ENCODE measurements at regions of chr13 and their contacts with region 1.

Region 1: DNA sequence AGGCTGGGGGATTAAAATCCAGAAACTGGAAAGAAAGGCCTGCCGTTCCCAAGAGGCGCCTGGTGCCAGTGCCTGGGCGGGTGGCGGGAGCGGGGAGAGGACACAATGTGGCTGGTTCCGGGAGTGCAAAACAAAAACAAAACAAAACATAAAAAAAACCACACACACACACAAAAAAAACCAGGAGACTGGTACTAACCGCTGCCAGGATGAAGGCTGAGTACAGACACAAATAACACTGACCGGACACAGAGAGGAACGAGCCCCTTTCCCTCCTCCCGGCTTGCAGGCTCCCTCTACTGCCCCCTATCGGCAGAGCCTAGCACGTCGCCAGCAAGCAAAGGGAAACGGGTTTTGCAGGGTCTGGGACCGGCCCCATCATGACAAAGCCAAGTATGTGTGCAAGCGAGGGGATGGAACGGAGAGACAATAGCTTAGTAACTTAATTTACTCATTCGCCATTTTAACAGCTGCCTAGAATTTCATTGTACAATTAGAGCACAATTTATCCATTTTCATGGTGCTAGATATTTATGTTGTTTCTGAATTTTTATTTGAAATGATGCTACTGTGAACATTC is 17.9 kb upstream of the ZDHHC20 start:
- DNase-seq: peak; percentile 87
- H3K4me3 ChIP-seq: peak overlapping the region in 3 of 4 donors; percentile 22 to 50 (median 36)
- H3K27ac ChIP-seq: peak overlapping the region in 3 of 4 donors; percentile 23 to 70 (median 58)
- H3K4me1 ChIP-seq: peaks cover 0 to 17% (median 4%) of the 10 kb centered on the region in 4 donors
- H3K27me3 ChIP-seq: peaks cover 5% of the 10 kb centered on the region
- CTCF ChIP-seq: peak; percentile 94 to 99 (median 97)
- EP300 ChIP-seq: no peak
- POLR2A ChIP-seq: peak; percentile 10

Region 2: GRCh38 chr13:20939682-20940081 is 537.3 kb before region 1 on chr13:
- in situ Hi-C with region 1: loop called (anchors 10 to 25 kb)
- intact Hi-C with region 1: loop called (anchors 10 kb)
- DNase-seq: no peak
- H3K4me3 ChIP-seq: no peak overlapping the region
- H3K27ac ChIP-seq: peak overlapping the region in 1 of 4 donors; percentile 33
- H3K4me1 ChIP-seq: peaks cover 0 to 23% (median 7%) of the 10 kb centered on the region in 4 donors
- H3K27me3 ChIP-seq: no peaks in the 10 kb centered on the region
- CTCF ChIP-seq: no peak
- EP300 ChIP-seq: no peak
- POLR2A ChIP-seq: no peak

Region 3: DNA sequence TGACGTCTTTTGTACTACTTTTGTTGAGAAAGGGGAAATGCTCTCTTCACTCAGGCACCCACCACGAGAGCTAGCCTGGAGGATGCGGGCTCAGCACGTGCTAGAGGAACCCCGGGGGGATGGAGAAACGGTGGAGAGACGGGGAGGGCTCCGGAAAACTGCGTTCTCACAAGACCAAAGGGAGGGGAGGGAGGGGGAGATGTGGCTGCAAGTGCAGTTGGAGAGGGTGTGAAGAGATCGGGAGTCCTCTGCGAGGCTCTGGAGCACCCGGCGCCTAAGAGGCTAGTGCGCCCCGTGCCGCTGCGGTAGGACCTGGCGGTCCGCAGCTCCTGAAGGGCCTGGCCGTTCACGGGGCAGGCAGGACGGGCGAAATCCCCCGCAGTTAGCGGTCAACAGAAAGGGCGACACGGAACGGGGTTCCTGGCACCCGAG is 531.0 kb before region 1 on chr13:
- in situ Hi-C with region 1: loop called in 3 of 4 experiments (anchors 10 to 25 kb)
- intact Hi-C with region 1: no loop called
- DNase-seq: peak; percentile 22
- H3K4me3 ChIP-seq: peak overlapping the region in 1 of 4 donors; percentile 18
- H3K27ac ChIP-seq: no peak overlapping the region
- H3K4me1 ChIP-seq: peaks cover 0 to 16% (median 10%) of the 10 kb centered on the region in 4 donors
- H3K27me3 ChIP-seq: peaks cover 8% of the 10 kb centered on the region
- CTCF ChIP-seq: no peak
- EP300 ChIP-seq: no peak
- POLR2A ChIP-seq: no peak

Region 4: DNA sequence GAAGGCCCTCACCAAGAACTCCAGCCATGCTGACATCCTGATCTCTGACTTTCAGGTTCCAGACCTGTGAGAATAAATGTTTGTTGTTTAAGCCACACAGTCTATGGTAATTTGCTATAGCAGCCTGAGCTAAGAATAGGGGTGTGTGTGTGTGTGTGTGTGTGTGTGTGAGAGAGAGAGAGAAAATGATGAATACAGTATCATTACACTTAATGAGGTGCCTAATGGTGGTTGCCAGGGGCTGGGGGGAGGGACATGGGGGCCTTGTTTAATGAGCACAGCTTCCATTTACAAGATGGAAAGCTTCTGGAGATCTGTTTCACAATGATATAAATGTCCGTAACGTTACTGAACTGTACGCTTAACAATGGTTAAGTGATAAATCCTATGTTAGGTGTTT is 361.8 kb before region 1 on chr13:
- in situ Hi-C with region 1: loop called in 3 of 4 experiments (anchors 10 to 25 kb)
- intact Hi-C with region 1: loop called (anchors 5 kb)
- DNase-seq: no peak
- H3K4me3 ChIP-seq: no peak overlapping the region
- H3K27ac ChIP-seq: no peak overlapping the region
- H3K4me1 ChIP-seq: no peaks in the 10 kb centered on the region
- H3K27me3 ChIP-seq: no peaks in the 10 kb centered on the region
- CTCF ChIP-seq: no peak
- EP300 ChIP-seq: no peak
- POLR2A ChIP-seq: no peak

Region 5: DNA sequence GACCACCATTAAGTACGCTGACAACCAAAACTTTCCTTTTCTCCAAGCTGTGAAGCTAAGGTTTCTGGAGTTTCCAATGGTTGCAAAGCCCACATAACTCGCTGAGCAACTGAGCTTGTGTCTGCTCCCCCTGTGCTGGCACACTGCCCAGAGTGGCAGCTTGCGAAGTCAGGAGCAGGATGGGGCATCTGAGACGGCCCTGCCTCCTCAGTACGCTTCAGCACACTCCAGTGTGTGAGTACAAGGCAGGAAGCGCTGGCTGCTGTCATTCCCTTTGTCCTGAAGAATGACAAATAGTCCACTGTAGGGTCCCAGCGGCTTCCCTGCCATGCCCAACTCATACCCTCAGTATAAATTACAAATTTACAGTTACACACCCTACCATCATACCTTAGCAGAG is 352.1 kb before region 1 on chr13:
- in situ Hi-C with region 1: loop called in 2 of 4 experiments (anchors 25 kb)
- intact Hi-C with region 1: no loop called
- DNase-seq: no peak
- H3K4me3 ChIP-seq: no peak overlapping the region
- H3K27ac ChIP-seq: no peak overlapping the region
- H3K4me1 ChIP-seq: no peaks in the 10 kb centered on the region
- H3K27me3 ChIP-seq: no peaks in the 10 kb centered on the region
- CTCF ChIP-seq: no peak
- EP300 ChIP-seq: no peak
- POLR2A ChIP-seq: no peak

Region 6: GRCh38 chr13:21297914-21298831 is 178.8 kb before region 1 on chr13:
- in situ Hi-C with region 1: loop called (anchors 10 to 25 kb)
- intact Hi-C with region 1: loop called (anchors 5 kb)
- DNase-seq: peak; percentile 90
- H3K4me3 ChIP-seq: peak overlapping the region; percentile 64 to 92 (median 74)
- H3K27ac ChIP-seq: peak overlapping the region; percentile 75 to 88 (median 86)
- H3K4me1 ChIP-seq: peaks cover 7 to 24% (median 13%) of the 10 kb centered on the region in 4 donors
- H3K27me3 ChIP-seq: no peaks in the 10 kb centered on the region
- CTCF ChIP-seq: peak; percentile 82 to 95 (median 87)
- EP300 ChIP-seq: no peak
- POLR2A ChIP-seq: peak; percentile 35